Pancreas (tissue), 10 donors: ENCODE measurements at regions of chr6 and their contacts with region 1.

Region 1: GRCh38 chr6:137094411-137095008 is 49.7 kb upstream of the IL20RA start:
- DNase-seq: peak in 3 of 6 donors; percentile 9 to 61 (median 32)
- ATAC-seq: peak; percentile 58 to 92 (median 86)
- H3K4me3 ChIP-seq: no peak overlapping the region
- H3K27ac ChIP-seq: no peak overlapping the region
- H3K4me1 ChIP-seq: no peaks in the 10 kb centered on the region
- H3K27me3 ChIP-seq: no peaks in the 10 kb centered on the region
- CTCF ChIP-seq: peak; percentile 33 to 70 (median 41)

Region 2: GRCh38 chr6:137160763-137161162 is 66.3 kb after region 1 on chr6:
- intact Hi-C with region 1: loop called in 1 of 3 experiments (anchors 2 kb)
- DNase-seq: no peak
- ATAC-seq: peak in 1 of 4 donors; percentile 35
- H3K4me3 ChIP-seq: no peak overlapping the region
- H3K27ac ChIP-seq: no peak overlapping the region
- H3K4me1 ChIP-seq: no peaks in the 10 kb centered on the region
- H3K27me3 ChIP-seq: no peaks in the 10 kb centered on the region
- CTCF ChIP-seq: no peak

Region 3: GRCh38 chr6:137323860-137324259 is 229.3 kb after region 1 on chr6:
- intact Hi-C with region 1: loop called in 1 of 3 experiments (anchors 10 kb)
- DNase-seq: no peak
- ATAC-seq: no peak
- H3K4me3 ChIP-seq: no peak overlapping the region
- H3K27ac ChIP-seq: no peak overlapping the region
- H3K4me1 ChIP-seq: no peaks in the 10 kb centered on the region
- H3K27me3 ChIP-seq: no peaks in the 10 kb centered on the region
- CTCF ChIP-seq: no peak

Region 4: DNA sequence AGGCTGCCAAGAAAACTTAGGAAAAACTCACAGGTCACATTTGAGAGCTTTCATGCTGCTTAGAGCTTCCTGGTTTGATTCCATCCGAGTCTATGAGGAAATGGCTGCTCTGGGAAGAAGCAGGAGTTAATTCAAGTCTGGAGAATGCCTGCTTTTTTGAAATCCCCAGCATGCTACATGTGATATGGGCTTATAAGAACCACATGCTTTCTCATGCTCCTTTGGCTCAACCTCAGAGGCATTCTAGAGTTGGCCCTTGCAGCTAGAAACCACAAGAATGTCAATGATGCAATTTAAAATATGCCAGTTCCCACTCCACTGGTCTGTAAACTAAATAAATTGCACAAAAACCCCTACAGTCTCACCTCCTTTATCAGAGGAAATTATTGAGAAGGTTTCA is 542.6 kb after region 1 on chr6:
- intact Hi-C with region 1: loop called in 1 of 3 experiments (anchors 10 kb)
- DNase-seq: no peak
- ATAC-seq: peak in 3 of 4 donors; percentile 57 to 69 (median 61)
- H3K4me3 ChIP-seq: no peak overlapping the region
- H3K27ac ChIP-seq: no peak overlapping the region
- H3K4me1 ChIP-seq: peaks cover 0 to 5% (median 0%) of the 10 kb centered on the region in 3 donors
- H3K27me3 ChIP-seq: no peaks in the 10 kb centered on the region
- CTCF ChIP-seq: no peak